Panc1 (cell line): ENCODE measurements at regions of chr15 and their contacts with region 1.

Region 1: GRCh38 chr15:44426975-44427755 is at the start of gene CTDSPL2:
- DNase-seq: peak; percentile 98
- ATAC-seq: peak; percentile 97
- H3K4me3 ChIP-seq: peak within 1 kb of the TSS; percentile 94 to 96
- H3K27ac ChIP-seq: peak within 1 kb of the TSS; percentile 100
- H3K4me1 ChIP-seq: peaks cover 12% of the 10 kb centered on the region; the same call in 1 of the 2 replicates
- H3K27me3 ChIP-seq: no peaks in the 10 kb centered on the region
- CTCF ChIP-seq: no peak
- total RNA-seq, gene CTDSPL2: 70.6 TPM

Region 2: DNA sequence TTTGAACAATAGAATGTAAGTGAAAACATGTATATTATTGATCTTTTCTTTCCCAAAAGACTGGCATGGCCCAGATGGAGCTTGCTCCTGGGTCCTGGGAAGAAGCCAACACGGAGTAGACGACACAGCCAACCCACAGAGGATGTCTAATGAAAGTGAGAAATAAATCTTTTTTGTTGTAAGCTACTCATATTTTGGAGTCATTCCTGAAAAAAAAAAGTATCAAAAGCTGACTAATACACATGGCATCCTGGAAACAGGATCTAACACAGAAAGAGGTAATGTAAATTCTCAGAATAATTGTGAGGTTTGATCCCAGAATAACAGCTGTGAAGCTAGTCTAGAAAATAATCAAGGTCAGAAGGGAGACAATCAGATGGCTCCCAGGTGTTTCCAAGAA is 219.5 kb before region 1 on chr15:
- CTCF ChIA-PET with region 1: no interaction called
- POLR2A ChIA-PET with region 1: interaction called, 10 read pairs
- in situ Hi-C with region 1: no loop called
- intact Hi-C with region 1: no loop called
- DNase-seq: no peak
- ATAC-seq: no peak
- H3K4me3 ChIP-seq: no peak overlapping the region
- H3K27ac ChIP-seq: no peak overlapping the region
- H3K4me1 ChIP-seq: no peaks in the 10 kb centered on the region
- H3K27me3 ChIP-seq: no peaks in the 10 kb centered on the region
- CTCF ChIP-seq: no peak

Region 3: DNA sequence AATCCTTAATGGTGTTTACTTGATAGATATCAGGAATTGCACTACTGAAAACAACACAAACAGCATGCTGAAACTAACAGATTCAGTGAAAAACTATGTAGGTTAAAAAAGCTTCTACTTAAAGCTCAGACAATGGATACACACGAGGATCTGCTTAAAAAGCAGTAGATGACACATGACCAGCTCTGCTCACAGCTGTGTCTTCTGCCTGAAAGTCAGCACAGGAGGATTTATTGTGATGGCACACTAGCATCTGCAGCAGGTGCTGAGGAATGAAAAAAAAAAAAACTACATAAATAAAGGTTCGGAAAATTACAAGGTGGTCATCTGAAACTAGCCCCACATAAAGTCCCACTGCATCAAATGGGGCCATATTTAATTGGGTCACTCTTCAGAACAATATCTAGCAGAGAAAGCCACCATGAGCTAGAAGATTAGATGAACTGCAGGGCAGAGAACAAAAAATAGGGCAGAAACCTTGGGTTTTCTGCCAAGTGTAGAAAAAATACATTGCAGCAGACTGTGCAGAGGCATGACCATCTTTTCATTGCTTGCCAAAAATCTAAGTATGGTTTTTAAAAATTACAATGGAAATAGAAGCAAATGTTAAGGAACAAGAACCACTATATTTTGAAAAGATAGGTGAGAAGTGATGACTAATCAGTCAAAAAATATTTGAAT is 151.9 kb before region 1 on chr15:
- CTCF ChIA-PET with region 1: interaction called, 11 read pairs
- POLR2A ChIA-PET with region 1: no interaction called
- in situ Hi-C with region 1: no loop called
- intact Hi-C with region 1: no loop called
- DNase-seq: no peak
- ATAC-seq: no peak
- H3K4me3 ChIP-seq: no peak overlapping the region
- H3K27ac ChIP-seq: no peak overlapping the region
- H3K4me1 ChIP-seq: no peaks in the 10 kb centered on the region
- H3K27me3 ChIP-seq: no peaks in the 10 kb centered on the region; the same call in 1 of the 2 replicates
- CTCF ChIP-seq: no peak

Region 4: DNA sequence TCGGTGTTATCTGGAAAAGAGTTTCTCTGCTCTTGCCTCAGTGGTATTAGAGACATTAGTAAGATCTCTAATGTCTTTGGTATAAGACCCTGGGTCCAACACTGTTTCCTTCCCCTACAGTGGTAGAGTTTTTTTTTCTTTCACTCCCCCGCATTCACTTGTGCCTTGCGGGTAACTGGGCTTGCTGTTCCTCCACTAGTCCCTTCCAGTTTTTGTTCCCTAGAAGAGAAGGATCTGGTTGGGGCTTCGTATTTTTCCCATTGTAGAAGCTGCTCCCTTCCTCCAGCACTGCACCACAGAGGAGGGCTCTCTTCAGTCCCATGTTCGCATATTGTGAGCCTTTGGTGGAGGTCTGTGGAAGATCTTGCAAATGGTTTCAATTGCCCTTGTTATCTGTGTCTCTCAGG is 13.9 kb after region 1 on chr15:
- CTCF ChIA-PET with region 1: interaction called, 10 read pairs
- POLR2A ChIA-PET with region 1: interaction called, 5 read pairs
- in situ Hi-C with region 1: no loop called
- intact Hi-C with region 1: no loop called
- DNase-seq: no peak
- ATAC-seq: peak; percentile 45; the same call in 1 of the 2 replicates
- H3K4me3 ChIP-seq: no peak overlapping the region
- H3K27ac ChIP-seq: no peak overlapping the region
- H3K4me1 ChIP-seq: peaks cover 13% of the 10 kb centered on the region
- H3K27me3 ChIP-seq: no peaks in the 10 kb centered on the region
- CTCF ChIP-seq: no peak

Region 5: GRCh38 chr15:44458429-44458828 is 31.3 kb after region 1 on chr15:
- CTCF ChIA-PET with region 1: no interaction called
- POLR2A ChIA-PET with region 1: interaction called, 10 read pairs
- in situ Hi-C with region 1: no loop called
- intact Hi-C with region 1: no loop called
- DNase-seq: no peak
- ATAC-seq: peak; percentile 77
- H3K4me3 ChIP-seq: no peak overlapping the region
- H3K27ac ChIP-seq: no peak overlapping the region
- H3K4me1 ChIP-seq: peaks cover 16% of the 10 kb centered on the region
- H3K27me3 ChIP-seq: no peaks in the 10 kb centered on the region
- CTCF ChIP-seq: no peak

Region 6: GRCh38 chr15:44482088-44482487 is 54.9 kb after region 1 on chr15:
- CTCF ChIA-PET with region 1: interaction called, 7 read pairs
- POLR2A ChIA-PET with region 1: interaction called, 14 read pairs
- in situ Hi-C with region 1: no loop called
- intact Hi-C with region 1: no loop called
- DNase-seq: no peak
- ATAC-seq: peak; percentile 63; the same call in 1 of the 2 replicates
- H3K4me3 ChIP-seq: no peak overlapping the region
- H3K27ac ChIP-seq: no peak overlapping the region
- H3K4me1 ChIP-seq: no peaks in the 10 kb centered on the region
- H3K27me3 ChIP-seq: no peaks in the 10 kb centered on the region
- CTCF ChIP-seq: no peak